Dendritic cell treated with granulocyte-macrophage colony-stimulating factor and Interleukin-4, amounts not matched to agents 40 ng/mL and 50 ng/mL, for 4 days (primary cell): ENCODE measurements at regions of chr6 and their contacts with region 1.

Region 1: DNA sequence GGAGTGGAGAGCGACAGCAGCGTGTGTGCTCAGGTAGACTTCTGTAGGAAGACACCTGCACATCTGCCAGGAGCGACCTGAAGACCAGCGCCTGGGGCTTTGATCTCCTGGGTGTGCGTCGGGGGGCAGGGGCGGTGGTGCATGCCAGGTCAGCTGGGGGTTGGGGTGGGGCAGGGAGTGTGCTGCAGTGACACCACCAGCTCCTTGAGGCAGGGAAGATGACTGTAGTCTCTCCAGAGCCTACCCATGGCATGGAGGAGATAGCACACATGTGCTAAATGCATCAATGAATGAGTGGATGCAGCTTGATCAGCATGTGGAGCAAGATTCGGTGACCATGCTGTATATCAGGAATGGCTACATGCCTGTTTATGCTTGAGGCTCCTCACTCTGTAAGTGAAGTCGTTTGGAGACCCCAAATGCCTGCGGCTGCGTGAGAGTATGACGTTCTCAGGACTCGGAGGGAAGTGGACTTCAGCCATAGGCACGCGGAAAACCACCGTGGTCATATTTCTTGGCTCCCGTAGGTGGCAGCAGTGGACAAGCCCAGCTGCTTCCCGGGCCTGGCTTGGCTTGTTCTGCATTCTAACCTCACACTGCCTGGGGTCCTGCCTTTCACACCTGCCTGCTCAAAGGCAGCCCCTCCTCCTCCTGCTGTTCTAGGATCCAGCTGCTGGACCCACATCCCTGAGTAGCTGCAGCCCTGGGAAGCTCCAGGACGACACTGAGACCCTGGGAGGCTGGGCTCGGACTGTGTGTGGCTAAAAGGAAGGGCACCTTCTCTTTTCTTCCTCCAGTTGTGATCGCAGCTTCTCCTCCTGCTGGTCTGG is 39.4 kb upstream of the KCNK16 start:
- H3K4me3 Mint-ChIP-seq: no peak overlapping the region
- H3K27ac Mint-ChIP-seq: no peak overlapping the region
- H3K4me1 Mint-ChIP-seq: peaks cover 10% of the 10 kb centered on the region
- H3K27me3 Mint-ChIP-seq: peaks cover 10% of the 10 kb centered on the region

Region 2: GRCh38 chr6:39389484-39389767 is 27.6 kb after region 1 on chr6:
- intact Hi-C with region 1: no loop called
- H3K4me3 Mint-ChIP-seq: no peak overlapping the region
- H3K27ac Mint-ChIP-seq: no peak overlapping the region
- H3K4me1 Mint-ChIP-seq: no peaks in the 10 kb centered on the region
- H3K27me3 Mint-ChIP-seq: peaks cover 3% of the 10 kb centered on the region

Region 3: DNA sequence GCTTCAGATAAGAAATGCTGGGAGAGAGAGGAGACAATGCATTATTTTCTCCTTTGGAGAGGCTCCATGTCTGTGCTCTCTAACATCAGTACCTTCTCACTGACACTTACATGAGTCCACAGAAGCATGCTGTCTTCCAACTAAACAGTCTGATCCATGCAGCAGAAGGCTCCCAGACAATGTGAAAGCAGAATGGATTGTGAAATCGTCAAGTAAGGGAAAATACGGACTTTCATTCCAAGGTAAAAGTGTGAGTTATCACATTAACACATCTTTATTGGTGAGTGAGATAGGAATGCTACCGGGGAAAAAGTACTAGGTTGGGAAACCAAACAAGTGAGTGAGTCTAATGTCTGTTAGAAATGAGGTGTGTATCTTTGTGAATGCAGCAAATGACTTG is 128.2 kb after region 1 on chr6:
- intact Hi-C with region 1: no loop called
- H3K4me3 Mint-ChIP-seq: no peak overlapping the region
- H3K27ac Mint-ChIP-seq: no peak overlapping the region
- H3K4me1 Mint-ChIP-seq: no peaks in the 10 kb centered on the region
- H3K27me3 Mint-ChIP-seq: no peaks in the 10 kb centered on the region

Region 4: GRCh38 chr6:39892490-39893129 is 530.7 kb after region 1 on chr6:
- intact Hi-C with region 1: loop called (anchors 5 kb)
- H3K4me3 Mint-ChIP-seq: no peak overlapping the region
- H3K27ac Mint-ChIP-seq: no peak overlapping the region
- H3K4me1 Mint-ChIP-seq: no peaks in the 10 kb centered on the region
- H3K27me3 Mint-ChIP-seq: peaks cover 10% of the 10 kb centered on the region